A549 (cell line): ENCODE measurements at regions of chr15 and their contacts with region 1.

Region 1: DNA sequence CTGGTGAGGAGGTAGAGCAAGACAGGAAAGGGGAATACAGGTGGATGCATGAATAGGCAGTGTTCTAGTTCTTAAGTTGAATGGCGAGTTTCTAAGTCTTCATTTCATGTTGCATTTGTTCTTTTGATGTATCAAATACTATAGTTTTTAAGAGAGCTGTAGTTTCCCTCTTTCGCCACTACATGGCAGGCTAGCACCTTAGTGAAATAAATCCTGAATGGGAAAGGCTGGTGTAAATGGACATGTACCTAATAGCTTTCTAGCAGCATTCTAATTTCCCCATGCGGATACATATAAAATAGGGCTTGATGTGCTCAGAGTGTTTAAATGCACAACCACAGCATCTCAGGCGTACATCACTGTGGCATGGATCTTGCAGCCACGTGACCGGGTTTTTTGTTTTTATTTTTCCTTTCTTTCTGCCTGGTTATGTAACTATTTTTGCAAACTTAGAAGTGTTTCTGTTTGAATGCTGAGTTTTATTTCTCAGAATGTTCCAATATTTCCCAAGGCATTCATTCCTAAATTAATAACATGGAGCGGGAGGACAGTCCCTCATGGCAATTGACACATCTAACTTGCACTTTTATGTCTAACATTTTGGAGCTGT is 23.5 kb upstream of the CLN6 start:
- DNase-seq: peak; percentile 82 to 88
- ATAC-seq: peak; percentile 69 to 74
- H3K4me3 ChIP-seq: no peak overlapping the region
- H3K27ac ChIP-seq: no peak overlapping the region
- H3K4me1 ChIP-seq: peaks cover 12% of the 10 kb centered on the region; the same call in 2 of the 3 replicates
- CTCF ChIP-seq: peak; percentile 96
- EP300 ChIP-seq: no peak
- POLR2A ChIP-seq: no peak
- RAD21 ChIP-seq: peak; percentile 95 to 97

Region 2: GRCh38 chr15:68265081-68265480 is 12.1 kb after region 1 on chr15:
- CTCF ChIA-PET with region 1: interaction called, 15 read pairs
- POLR2A ChIA-PET with region 1: no interaction called
- DNase-seq: no peak
- ATAC-seq: no peak
- H3K4me3 ChIP-seq: no peak overlapping the region
- H3K27ac ChIP-seq: no peak overlapping the region
- H3K4me1 ChIP-seq: no peaks in the 10 kb centered on the region
- CTCF ChIP-seq: no peak
- EP300 ChIP-seq: no peak
- POLR2A ChIP-seq: no peak
- RAD21 ChIP-seq: no peak

Region 3: DNA sequence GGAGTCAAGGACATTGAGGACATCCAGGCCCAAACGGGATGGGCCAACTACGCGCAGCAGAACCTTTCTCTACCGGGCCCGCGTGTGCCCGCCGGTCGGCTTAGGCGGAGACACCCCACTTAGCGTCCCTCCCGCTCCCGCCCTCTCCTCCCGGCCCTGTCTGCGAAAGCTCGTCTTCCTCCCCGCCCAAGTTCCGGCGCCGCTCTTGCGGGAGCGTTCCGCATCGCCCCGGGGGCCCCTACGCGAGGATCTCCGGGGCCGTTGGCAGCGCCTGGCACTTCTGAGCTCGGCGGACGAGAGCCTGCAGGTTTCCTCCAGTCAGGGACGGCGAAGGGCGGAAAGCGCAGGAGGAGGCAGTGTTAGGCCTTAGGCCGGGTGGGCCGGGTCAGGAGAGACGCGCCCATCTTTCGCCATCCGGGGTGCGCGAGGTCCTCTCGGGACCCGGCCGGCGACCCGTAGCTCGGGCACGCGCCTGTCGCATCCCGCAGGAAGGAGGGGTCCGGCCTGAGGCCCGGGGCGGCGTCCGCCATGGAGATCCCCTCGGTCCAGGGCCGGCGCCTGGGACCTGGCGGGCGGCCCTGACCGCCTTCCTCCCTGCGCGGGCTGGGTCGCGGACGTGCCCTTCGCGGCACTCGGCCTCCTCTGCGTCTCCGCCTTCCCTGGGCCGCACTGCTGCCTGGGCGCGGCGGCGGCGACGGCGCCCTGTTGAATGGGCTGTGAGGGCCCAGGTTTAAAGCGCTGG is 24.7 kb after region 1 on chr15 and contains the start of gene FEM1B:
- CTCF ChIA-PET with region 1: interaction called, 86 read pairs
- POLR2A ChIA-PET with region 1: interaction called, 35 read pairs
- DNase-seq: peak; percentile 93 to 98
- ATAC-seq: peak; percentile 83 to 86
- H3K4me3 ChIP-seq: peak within 1 kb of the TSS; percentile 69
- H3K27ac ChIP-seq: peak within 1 kb of the TSS; percentile 94 to 97
- H3K4me1 ChIP-seq: peaks cover 68% of the 10 kb centered on the region
- CTCF ChIP-seq: peak; percentile 37; the same call in 2 of the 3 replicates
- EP300 ChIP-seq: no peak
- POLR2A ChIP-seq: peak; percentile 67
- RAD21 ChIP-seq: no peak; a peak in 1 of 5 replicates
- polyA plus RNA-seq, gene FEM1B: 59.1 and 103 TPM in 2 replicates

Region 4: DNA sequence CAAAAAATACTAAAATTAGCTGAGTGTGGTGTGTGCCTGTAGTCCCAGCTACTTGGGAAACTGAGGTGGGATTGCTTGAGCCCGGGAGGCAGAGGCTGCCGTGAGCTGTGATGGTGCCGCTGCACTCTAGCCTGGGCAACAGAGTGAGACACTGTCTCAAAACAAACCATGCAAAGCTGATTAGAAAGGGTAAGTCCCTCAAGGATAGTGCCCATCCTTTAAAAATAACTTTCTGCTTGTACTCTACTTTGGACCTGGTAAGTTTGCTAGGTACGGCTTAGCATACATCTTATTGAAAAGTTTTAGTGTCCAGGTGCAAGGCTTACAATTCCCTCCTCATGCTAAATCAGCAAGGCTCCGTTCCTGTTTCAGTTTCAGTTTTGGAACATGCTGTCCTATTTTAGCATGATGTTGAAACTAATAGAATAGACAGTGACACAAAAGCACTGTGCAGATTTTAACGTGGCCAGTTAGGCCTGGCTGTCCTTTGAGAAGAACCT is 45.9 kb after region 1 on chr15:
- CTCF ChIA-PET with region 1: interaction called, 189 read pairs
- POLR2A ChIA-PET with region 1: interaction called, 3 read pairs
- DNase-seq: no peak
- ATAC-seq: no peak
- H3K4me3 ChIP-seq: no peak overlapping the region
- H3K27ac ChIP-seq: no peak overlapping the region
- H3K4me1 ChIP-seq: peaks cover 26% of the 10 kb centered on the region
- CTCF ChIP-seq: no peak
- EP300 ChIP-seq: no peak
- POLR2A ChIP-seq: no peak
- RAD21 ChIP-seq: no peak

Region 5: DNA sequence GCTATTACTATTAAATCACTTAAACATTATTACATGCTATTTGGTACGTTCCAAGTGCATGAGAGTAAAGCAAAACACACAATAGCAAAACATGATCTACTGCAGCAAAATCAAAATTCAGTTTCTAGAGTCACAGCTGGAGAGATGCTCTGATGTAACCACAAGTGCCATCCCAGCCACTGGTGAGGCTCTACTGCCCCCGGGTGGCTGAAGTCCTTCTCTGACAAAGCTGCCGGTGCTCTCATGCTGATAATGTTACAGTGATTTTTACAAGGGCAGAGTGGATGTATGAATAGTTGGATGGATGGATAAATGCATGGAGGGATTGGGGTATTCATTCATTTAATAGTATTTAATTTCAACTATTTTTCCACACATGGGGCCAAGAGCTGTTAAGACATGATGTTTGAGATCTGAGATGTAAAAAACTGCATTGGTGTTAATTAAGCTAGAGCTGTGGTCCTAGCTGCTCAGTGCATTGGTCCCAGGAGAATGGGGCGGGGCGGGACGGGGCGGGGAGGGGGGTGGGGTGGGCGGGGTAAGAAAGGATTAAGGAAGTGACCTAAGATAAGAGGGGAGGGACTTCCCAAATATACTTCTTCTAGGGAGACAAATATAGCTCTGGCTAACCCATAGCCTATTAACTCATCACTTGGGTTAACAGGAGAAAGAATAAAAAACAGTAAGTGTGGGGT is 672.0 kb after region 1 on chr15:
- CTCF ChIA-PET with region 1: interaction called, 17 read pairs
- POLR2A ChIA-PET with region 1: no interaction called
- DNase-seq: peak; percentile 78 to 90
- ATAC-seq: peak; percentile 96 to 98
- H3K4me3 ChIP-seq: no peak overlapping the region
- H3K27ac ChIP-seq: no peak overlapping the region
- H3K4me1 ChIP-seq: no peaks in the 10 kb centered on the region
- CTCF ChIP-seq: peak; percentile 97
- EP300 ChIP-seq: no peak
- POLR2A ChIP-seq: no peak
- RAD21 ChIP-seq: peak; percentile 96 to 98